ENCODE measurements at regions of chr10 and their contacts with region 1.

Region 1: GRCh38 chr10:88598055-88598454 is 11.5 kb downstream of the LIPJ start:
- DNase-seq: no peak
- H3K4me3 ChIP-seq: no peak overlapping the region
- H3K27ac ChIP-seq: no peak overlapping the region
- H3K4me1 ChIP-seq: no peaks in the 10 kb centered on the region
- H3K27me3 ChIP-seq: no peaks in the 10 kb centered on the region
- CTCF ChIP-seq: no peak

Region 2: DNA sequence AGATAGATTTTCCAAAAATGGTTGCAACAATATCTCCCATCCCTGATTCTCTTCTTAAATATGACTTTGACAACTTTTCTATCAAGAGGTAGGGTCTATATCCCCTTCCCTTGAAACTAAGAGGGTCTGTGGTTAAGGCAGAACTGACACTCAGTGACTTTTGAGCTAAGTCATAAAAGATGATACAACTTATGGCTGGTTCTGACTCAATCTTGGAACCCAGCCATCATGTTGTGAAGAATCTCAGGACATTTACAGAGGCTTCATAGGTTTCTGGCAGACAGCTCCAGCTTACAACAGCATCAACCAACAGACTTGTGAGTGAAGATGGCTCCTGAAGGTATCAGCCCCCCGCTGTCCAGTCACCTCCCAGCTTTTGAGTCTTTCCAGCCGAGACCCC is 218.5 kb before region 1 on chr10:
- CTCF ChIA-PET with region 1: no interaction called
- POLR2A ChIA-PET with region 1: no interaction called
- intact Hi-C with region 1: no loop called
- DNase-seq: no peak
- H3K4me3 ChIP-seq: no peak overlapping the region
- H3K27ac ChIP-seq: no peak overlapping the region
- H3K4me1 ChIP-seq: no peaks in the 10 kb centered on the region
- H3K27me3 ChIP-seq: no peaks in the 10 kb centered on the region
- CTCF ChIP-seq: no peak

Region 3: DNA sequence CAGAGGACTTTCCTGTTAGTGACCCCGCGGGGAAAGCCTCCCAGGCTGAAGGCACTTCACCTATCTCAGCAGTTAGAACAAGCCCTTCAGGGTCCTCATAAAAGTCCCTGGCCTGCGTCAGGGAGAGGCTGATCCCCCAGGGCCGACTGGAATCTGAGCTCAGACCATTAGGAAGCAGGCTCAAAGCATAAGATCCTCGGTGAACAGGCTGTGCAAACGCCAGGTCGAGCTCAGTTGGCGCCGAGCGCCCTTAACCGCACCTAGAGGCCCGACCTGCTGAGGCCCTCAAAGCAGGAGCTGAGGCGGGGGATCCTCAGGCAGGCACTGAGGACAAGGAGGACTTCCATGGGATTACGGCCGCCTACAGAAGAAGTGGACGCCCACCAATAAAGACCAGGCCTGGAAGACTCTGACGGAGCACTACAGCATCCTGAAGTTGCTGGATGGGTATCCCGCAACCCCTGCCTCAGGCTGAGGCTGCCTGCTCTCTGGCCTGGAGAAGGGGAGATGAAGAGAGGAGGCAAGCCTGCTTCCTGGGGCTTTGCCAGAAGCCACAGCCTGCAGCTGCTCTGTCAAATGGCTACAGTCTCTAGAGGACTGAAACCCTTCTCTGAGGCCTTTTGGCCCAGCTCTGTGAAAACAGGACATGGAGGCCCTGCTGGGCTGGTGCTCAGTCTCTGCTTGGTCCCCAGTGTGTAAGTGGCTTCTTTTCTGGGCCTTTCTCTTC is 18.4 kb after region 1 on chr10:
- CTCF ChIA-PET with region 1: no interaction called
- POLR2A ChIA-PET with region 1: interaction called, 11 read pairs
- intact Hi-C with region 1: no loop called
- DNase-seq: peak; percentile 10
- H3K4me3 ChIP-seq: no peak overlapping the region
- H3K27ac ChIP-seq: no peak overlapping the region
- H3K4me1 ChIP-seq: no peaks in the 10 kb centered on the region
- H3K27me3 ChIP-seq: no peaks in the 10 kb centered on the region
- CTCF ChIP-seq: no peak

Region 4: DNA sequence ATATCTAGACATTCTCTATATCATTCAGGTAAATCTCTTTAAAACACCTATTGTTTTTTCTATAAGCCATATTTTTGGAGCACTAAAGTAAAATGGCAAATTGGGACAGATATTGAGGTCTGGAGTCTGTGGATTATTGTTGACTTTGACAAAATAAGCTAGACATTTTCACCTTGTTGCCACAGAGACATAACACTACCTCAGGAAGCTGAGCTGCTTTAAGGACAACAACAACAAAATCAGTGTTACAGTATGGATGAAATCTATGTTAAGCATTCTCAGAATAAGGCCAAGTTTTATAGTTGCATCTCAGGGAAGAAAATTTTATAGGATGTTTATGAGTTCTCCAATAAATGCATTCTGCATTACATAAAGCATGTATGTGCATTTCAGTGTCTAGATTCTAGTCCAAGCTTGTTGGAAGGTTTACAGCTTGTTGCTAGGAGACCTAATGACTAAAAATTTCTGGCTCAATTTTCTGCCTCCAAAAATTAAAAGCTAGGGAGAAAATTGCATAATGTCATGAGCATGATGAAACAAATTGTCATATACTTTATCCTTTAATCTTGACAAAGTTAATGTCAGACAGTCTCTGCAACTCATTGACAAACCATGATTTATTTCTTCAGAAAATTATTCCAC is 222.8 kb after region 1 on chr10:
- CTCF ChIA-PET with region 1: no interaction called
- POLR2A ChIA-PET with region 1: no interaction called
- intact Hi-C with region 1: no loop called
- DNase-seq: peak; percentile 41
- H3K4me3 ChIP-seq: no peak overlapping the region
- H3K27ac ChIP-seq: peak overlapping the region; percentile 51
- H3K4me1 ChIP-seq: peaks cover 26% of the 10 kb centered on the region
- H3K27me3 ChIP-seq: no peaks in the 10 kb centered on the region
- CTCF ChIP-seq: no peak

Region 5: DNA sequence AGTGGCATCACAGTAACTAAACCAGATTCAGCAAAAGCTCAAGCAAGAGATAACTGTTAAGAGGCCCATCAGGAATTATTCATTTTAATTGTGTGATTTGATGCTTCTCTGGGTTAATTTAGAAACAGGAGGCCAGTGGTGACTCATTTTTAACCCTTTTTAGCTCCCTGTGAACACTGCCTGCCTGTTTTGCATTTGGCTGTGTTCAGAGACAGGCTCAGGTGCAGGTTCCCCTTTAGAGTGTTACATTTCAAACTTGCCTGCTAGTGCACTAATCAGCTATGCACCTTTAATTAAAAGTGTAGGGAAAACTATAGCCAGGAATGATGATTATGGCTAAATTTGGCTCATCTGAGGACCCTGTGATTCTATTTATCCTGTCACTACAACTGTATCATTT is 288.5 kb after region 1 on chr10:
- CTCF ChIA-PET with region 1: no interaction called
- POLR2A ChIA-PET with region 1: no interaction called
- intact Hi-C with region 1: no loop called
- DNase-seq: peak; percentile 53
- H3K4me3 ChIP-seq: no peak overlapping the region
- H3K27ac ChIP-seq: peak overlapping the region; percentile 6
- H3K4me1 ChIP-seq: peaks cover 71% of the 10 kb centered on the region
- H3K27me3 ChIP-seq: no peaks in the 10 kb centered on the region
- CTCF ChIP-seq: no peak